Breast epithelium (tissue), 4 donors: ENCODE measurements at regions of chr3 and their contacts with region 1.

Region 1: GRCh38 chr3:85110393-85110792 is 151.6 kb downstream of the CADM2 start:
- DNase-seq: no peak
- H3K4me3 ChIP-seq: no peak overlapping the region
- H3K27ac ChIP-seq: no peak overlapping the region
- H3K4me1 ChIP-seq: no peaks in the 10 kb centered on the region
- H3K27me3 ChIP-seq: no peaks in the 10 kb centered on the region
- CTCF ChIP-seq: no peak
- POLR2A ChIP-seq: no peak

Region 2: GRCh38 chr3:85081191-85081895 is 29.1 kb before region 1 on chr3:
- intact Hi-C with region 1: no loop called
- DNase-seq: no peak
- H3K4me3 ChIP-seq: no peak overlapping the region
- H3K27ac ChIP-seq: no peak overlapping the region
- H3K4me1 ChIP-seq: no peaks in the 10 kb centered on the region
- H3K27me3 ChIP-seq: no peaks in the 10 kb centered on the region
- CTCF ChIP-seq: no peak
- POLR2A ChIP-seq: no peak

Region 3: DNA sequence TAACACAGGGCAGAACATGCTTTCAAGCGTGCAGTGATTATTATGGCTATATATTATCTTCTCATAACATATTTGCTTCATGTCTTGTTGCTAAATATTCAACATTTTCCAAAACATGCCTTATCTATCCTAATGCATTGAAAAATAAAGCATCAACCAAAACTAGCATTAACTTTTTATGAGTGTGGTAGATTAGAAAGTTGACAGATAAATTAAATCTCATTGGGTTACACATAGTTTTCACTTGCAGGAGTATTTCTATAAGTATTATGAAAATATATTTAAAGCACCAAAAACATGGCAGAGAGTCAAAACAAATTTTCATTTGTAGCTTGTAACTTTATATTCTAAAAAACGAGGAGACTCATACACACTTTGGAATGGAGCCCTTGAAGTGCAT is 10.1 kb before region 1 on chr3:
- intact Hi-C with region 1: loop called (anchors 1 kb)
- DNase-seq: no peak
- H3K4me3 ChIP-seq: no peak overlapping the region
- H3K27ac ChIP-seq: no peak overlapping the region
- H3K4me1 ChIP-seq: no peaks in the 10 kb centered on the region
- H3K27me3 ChIP-seq: no peaks in the 10 kb centered on the region
- CTCF ChIP-seq: no peak
- POLR2A ChIP-seq: no peak

Region 4: GRCh38 chr3:85171976-85172375 is 61.6 kb after region 1 on chr3:
- intact Hi-C with region 1: no loop called
- DNase-seq: no peak
- H3K4me3 ChIP-seq: no peak overlapping the region
- H3K27ac ChIP-seq: no peak overlapping the region
- H3K4me1 ChIP-seq: no peaks in the 10 kb centered on the region
- H3K27me3 ChIP-seq: no peaks in the 10 kb centered on the region
- CTCF ChIP-seq: no peak
- POLR2A ChIP-seq: no peak